Colonic mucosa (tissue), 4 donors: ENCODE measurements at regions of chr3 and their contacts with region 1.

Region 1: GRCh38 chr3:141738022-141738890 is at the start of gene RNF7:
- DNase-seq: peak; percentile 94
- H3K4me3 ChIP-seq: peak within 1 kb of the TSS; percentile 92
- H3K27ac ChIP-seq: peak within 1 kb of the TSS; percentile 99
- H3K4me1 ChIP-seq: no peaks in the 10 kb centered on the region
- H3K27me3 ChIP-seq: no peaks in the 10 kb centered on the region
- CTCF ChIP-seq: peak; percentile 91
- total RNA-seq, gene RNF7: 89.0 to 148 TPM

Region 2: DNA sequence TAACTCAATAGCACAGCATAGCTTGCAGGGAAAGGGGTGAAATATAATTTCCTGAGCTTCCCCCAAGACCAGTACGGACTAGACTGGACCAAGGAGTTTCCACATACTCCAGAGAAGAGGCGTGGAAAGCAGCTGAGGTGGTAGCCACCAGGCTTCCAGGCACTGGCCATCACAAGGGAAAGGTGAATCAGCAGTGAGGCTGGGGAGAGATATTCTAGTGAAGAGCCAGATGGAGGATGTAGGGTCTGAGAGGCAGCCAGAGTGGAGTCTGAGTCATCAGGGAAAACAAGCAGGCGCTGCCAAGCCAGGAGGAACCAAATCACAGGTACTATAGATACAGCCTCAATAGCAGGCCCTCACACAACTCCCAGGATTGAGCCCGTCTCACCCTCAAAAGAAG is 261.0 kb before region 1 on chr3:
- intact Hi-C with region 1: no loop called
- DNase-seq: no peak
- H3K4me3 ChIP-seq: no peak overlapping the region
- H3K27ac ChIP-seq: no peak overlapping the region
- H3K4me1 ChIP-seq: no peaks in the 10 kb centered on the region
- H3K27me3 ChIP-seq: no peaks in the 10 kb centered on the region
- CTCF ChIP-seq: no peak

Region 3: GRCh38 chr3:141575879-141576743 is 162.1 kb before region 1 on chr3:
- intact Hi-C with region 1: loop called (anchors 5 kb)
- DNase-seq: no peak
- H3K4me3 ChIP-seq: no peak overlapping the region
- H3K27ac ChIP-seq: no peak overlapping the region
- H3K4me1 ChIP-seq: no peaks in the 10 kb centered on the region
- H3K27me3 ChIP-seq: no peaks in the 10 kb centered on the region
- CTCF ChIP-seq: peak; percentile 45

Region 4: GRCh38 chr3:141875374-141875892 is 137.2 kb after region 1 on chr3:
- intact Hi-C with region 1: loop called (anchors 1 kb)
- DNase-seq: peak; percentile 93
- H3K4me3 ChIP-seq: peak overlapping the region; percentile 94
- H3K27ac ChIP-seq: peak overlapping the region; percentile 94
- H3K4me1 ChIP-seq: peaks cover 8% of the 10 kb centered on the region
- H3K27me3 ChIP-seq: no peaks in the 10 kb centered on the region
- CTCF ChIP-seq: peak; percentile 90

Region 5: DNA sequence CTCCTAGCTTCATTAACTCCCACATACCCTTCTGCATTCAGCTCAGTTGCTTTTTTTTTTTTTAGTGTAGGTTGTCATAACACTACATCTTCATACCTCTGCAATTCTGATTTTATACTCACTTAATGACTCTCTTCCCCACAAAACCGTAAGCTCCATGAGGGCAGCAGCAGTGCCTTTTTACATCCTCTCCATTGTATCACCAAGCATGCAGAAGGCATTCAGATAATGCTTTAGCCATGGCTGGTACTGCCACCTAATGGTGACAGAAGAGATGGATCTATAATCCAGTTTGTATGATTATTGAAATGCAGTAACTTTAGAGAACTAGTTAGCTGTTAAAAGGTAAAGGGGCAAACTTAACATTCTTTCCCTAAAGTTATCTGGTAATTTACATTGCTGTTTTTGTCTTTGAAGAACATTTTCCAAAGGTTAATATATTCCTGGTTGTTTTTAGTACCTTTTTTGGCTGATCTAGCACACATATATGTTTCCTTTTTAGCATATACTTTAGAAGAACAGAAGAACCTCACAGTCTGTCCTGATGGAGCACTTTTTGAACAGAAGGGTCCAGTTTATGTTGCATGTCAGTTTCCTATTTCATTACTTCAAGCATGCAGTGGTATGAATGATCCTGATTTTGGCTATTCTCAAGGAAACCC is 175.0 kb after region 1 on chr3:
- intact Hi-C with region 1: loop called (anchors 5 kb)
- DNase-seq: peak; percentile 56
- H3K4me3 ChIP-seq: no peak overlapping the region
- H3K27ac ChIP-seq: no peak overlapping the region
- H3K4me1 ChIP-seq: no peaks in the 10 kb centered on the region
- H3K27me3 ChIP-seq: no peaks in the 10 kb centered on the region
- CTCF ChIP-seq: peak; percentile 66